ENCODE measurements at regions of chr5 and their contacts with region 1.

Region 1: GRCh38 chr5:151107738-151108508 is 27.1 kb upstream of the TNIP1 start:
- DNase-seq: no peak
- H3K4me3 ChIP-seq: no peak overlapping the region
- H3K27ac ChIP-seq: no peak overlapping the region
- H3K4me1 ChIP-seq: no peaks in the 10 kb centered on the region
- H3K27me3 ChIP-seq: no peaks in the 10 kb centered on the region; a peak in 1 of 7 replicates
- CTCF ChIP-seq: no peak
- EP300 ChIP-seq: no peak
- POLR2A ChIP-seq: no peak
- RAD21 ChIP-seq: no peak

Region 2: DNA sequence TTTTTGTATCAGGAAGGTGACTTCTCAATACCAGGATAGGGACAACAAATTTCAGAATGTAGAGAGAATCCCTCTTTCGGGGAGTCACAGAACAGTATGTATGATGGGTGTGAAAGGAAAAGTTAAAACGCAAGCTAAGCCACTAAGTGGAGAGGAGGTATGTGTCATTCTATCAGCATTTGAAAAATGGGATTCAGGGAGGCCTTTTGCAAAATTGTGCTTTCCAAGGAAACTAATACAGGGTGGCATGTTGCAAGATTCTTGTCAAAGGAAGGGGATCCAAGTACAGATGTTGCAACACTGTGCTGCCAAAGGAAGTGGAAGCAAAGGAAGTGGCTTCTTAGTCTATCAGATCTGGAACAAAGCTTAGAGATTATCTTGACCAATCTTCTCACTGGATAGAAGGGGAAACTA is 14.4 kb before region 1 on chr5:
- CTCF ChIA-PET with region 1: interaction called, 96 read pairs
- POLR2A ChIA-PET with region 1: interaction called, 5 read pairs
- DNase-seq: no peak
- H3K4me3 ChIP-seq: no peak overlapping the region
- H3K27ac ChIP-seq: no peak overlapping the region
- H3K4me1 ChIP-seq: peaks cover 1 to 20% (median 11%) of the 10 kb centered on the region in 4 experiments; a peak in 4 of 7 replicates
- H3K27me3 ChIP-seq: no peaks in the 10 kb centered on the region; a peak in 2 of 7 replicates
- CTCF ChIP-seq: no peak
- EP300 ChIP-seq: no peak
- POLR2A ChIP-seq: no peak
- RAD21 ChIP-seq: no peak